K562 (cell line): ENCODE measurements at regions of chr20 and their contacts with region 1.

Region 1: DNA sequence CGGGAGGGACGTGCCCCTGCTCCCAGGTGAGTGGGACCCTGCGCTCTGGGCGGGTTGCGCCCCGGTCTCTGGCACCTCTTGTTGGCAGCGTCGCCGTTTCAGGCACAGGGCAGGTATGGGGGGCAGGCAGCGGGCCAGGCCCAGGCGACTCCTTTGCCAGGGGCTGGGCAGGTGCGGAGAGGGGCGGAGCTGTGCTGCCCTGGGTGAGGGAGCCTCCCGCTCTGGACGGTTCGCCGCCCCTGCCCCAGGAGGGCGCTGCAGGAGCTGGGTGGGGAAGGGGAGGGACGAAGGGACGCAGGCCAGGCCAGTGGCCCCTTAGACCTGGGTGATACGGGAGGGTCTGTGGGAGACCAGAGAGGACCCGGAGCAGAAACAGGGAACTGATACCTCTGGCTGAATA is 663.9 kb upstream of the DEFB115 start:
- DNase-seq: peak in 3 of 4 experiments; percentile 18 to 44 (median 36)
- ATAC-seq: peak; percentile 90
- H3K4me3 ChIP-seq: no peak overlapping the region
- H3K27ac ChIP-seq: no peak overlapping the region
- H3K4me1 ChIP-seq: peaks cover 0 to 8% of the 10 kb centered on the region in 2 experiments; a peak in 2 of 5 replicates
- H3K27me3 ChIP-seq: no peaks in the 10 kb centered on the region; a peak in 1 of 5 replicates
- CTCF ChIP-seq: peak; percentile 39 to 60 (median 43); a peak in 5 of 6 replicates
- EP300 ChIP-seq: no peak
- POLR2A ChIP-seq: no peak
- RAD21 ChIP-seq: peak in 1 of 2 experiments; percentile 56; a peak in 2 of 4 replicates

Region 2: GRCh38 chr20:29427201-29428060 is 1166.1 kb before region 1 on chr20:
- CTCF ChIA-PET with region 1: no interaction called
- POLR2A ChIA-PET with region 1: no interaction called
- in situ Hi-C with region 1: no loop called
- intact Hi-C with region 1: no loop called
- DNase-seq: peak in 1 of 4 experiments; percentile 35
- ATAC-seq: no peak
- H3K4me3 ChIP-seq: peak overlapping the region; percentile 43
- H3K27ac ChIP-seq: no peak overlapping the region
- H3K4me1 ChIP-seq: peaks cover 0 to 5% of the 10 kb centered on the region in 2 experiments; a peak in 2 of 5 replicates
- H3K27me3 ChIP-seq: no peaks in the 10 kb centered on the region
- CTCF ChIP-seq: peak in 2 of 3 experiments; percentile 28 to 31; a peak in 2 of 6 replicates
- EP300 ChIP-seq: no peak
- POLR2A ChIP-seq: no peak
- RAD21 ChIP-seq: no peak

Region 3: DNA sequence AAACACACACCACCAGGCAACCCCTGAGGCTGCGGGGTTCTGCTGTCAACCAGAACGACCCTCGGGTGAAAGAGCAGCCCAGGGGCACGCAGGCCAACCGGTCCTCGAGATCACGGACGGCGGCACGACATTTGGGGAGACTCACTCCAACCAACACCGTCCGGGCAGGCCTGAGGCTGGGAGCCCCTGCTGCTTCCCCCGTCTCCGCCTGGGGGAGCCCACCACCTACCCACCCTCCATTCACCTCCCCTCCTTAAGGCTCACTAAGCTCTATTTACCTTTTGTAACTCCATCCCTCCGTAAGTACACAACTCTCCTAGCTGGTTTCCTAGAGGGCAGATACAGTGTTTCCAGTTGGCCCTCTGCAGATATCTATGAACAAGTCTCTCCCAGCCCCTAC is 307.4 kb before region 1 on chr20:
- CTCF ChIA-PET with region 1: no interaction called
- POLR2A ChIA-PET with region 1: no interaction called
- in situ Hi-C with region 1: no loop called
- intact Hi-C with region 1: loop called (anchors 10 kb)
- DNase-seq: peak; percentile 42 to 60 (median 49)
- ATAC-seq: peak; percentile 86
- H3K4me3 ChIP-seq: no peak overlapping the region
- H3K27ac ChIP-seq: no peak overlapping the region
- H3K4me1 ChIP-seq: peaks cover 0 to 40% of the 10 kb centered on the region in 2 experiments; a peak in 4 of 5 replicates
- H3K27me3 ChIP-seq: no peaks in the 10 kb centered on the region
- CTCF ChIP-seq: peak; percentile 65 to 74 (median 67)
- EP300 ChIP-seq: no peak
- POLR2A ChIP-seq: no peak
- RAD21 ChIP-seq: peak; percentile 71 to 87

Region 4: DNA sequence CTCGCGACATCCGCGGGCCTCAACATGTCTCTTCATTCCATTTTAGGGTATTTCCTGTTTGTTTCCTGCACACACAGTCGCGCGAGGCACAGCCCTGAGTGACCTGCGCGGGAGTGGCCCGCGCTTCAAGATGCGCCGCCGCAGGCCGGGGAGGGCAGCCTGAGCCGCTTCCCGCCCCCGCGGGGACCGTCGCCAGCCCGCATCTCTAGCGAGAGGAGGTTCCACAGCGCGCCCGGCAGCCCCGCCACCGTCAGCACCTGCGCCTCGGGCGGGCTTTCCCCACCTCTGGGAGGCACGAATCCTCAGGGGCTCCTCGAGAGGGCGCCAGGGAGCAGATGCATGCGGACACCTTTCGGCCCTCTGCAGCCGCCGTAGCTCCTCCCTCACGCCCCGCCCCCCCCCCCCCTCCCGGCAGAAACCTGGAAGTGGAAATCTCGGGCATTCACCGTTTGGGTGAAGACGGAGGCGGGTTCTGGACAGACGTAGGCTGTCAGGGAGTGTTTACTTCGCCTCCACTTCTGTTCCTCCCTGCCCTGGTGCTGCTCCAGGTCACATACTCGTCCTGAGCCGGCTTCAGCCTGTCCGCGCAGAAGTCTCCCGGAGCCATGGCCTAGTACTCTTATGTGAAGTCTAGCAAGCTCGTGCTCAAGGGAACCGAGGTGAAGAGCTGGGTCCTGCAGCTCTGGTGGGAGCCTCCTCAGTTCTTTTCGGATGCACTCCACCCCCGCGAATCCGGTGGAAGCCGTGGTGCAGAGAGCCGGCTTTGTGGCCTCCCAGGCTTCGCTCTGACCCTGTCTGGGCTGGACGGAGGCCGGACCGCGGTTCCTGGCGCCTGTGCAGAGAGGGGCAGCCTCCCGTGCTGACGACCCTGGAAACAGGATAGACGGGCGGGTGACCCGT is 216.6 kb before region 1 on chr20:
- CTCF ChIA-PET with region 1: no interaction called
- POLR2A ChIA-PET with region 1: no interaction called
- in situ Hi-C with region 1: no loop called
- intact Hi-C with region 1: loop called (anchors 10 kb)
- DNase-seq: peak; percentile 82 to 91 (median 84)
- ATAC-seq: peak; percentile 99
- H3K4me3 ChIP-seq: peak overlapping the region; percentile 81
- H3K27ac ChIP-seq: peak overlapping the region; percentile 80; the same call in 2 of the 3 replicates
- H3K4me1 ChIP-seq: peaks cover 0 to 5% of the 10 kb centered on the region in 2 experiments; a peak in 2 of 5 replicates
- H3K27me3 ChIP-seq: no peaks in the 10 kb centered on the region
- CTCF ChIP-seq: peak; percentile 66 to 80 (median 68); a peak in 5 of 6 replicates
- EP300 ChIP-seq: peak; percentile 15; the same call in 1 of the 2 replicates
- POLR2A ChIP-seq: peak; percentile 78
- RAD21 ChIP-seq: 0 out of 4 replicates have a peak, but pooled peaks of 1 of the 2 experiments have one; percentile 21

Region 5: DNA sequence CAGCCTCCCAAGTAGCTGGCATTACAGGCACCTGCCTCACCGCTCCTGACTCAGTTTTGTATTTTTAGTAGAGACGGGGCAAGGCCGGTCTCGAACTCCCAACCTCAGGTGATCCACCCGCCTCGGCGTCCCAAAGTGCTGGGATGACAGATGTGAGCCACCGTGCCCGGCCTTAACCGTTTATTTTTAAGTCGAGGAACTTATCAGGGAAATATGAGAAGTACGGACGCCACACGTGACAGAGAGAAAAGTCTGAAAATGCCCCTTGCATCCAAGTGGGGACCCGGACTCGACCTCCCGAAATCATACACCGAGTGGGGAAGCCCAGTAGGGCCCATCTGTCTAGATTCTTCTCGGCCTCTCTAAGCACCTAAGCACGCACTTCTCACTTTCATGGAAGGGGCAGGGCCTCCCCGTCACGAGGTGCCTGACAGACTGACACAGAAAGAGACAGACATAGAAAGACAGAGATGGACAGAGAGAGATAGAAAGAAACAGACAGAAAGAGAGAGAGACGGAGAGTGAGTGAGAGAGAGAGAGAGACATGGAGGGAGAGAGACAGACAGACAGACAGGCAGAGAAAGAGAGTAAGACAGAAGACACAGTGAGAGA is 92.6 kb before region 1 on chr20:
- CTCF ChIA-PET with region 1: no interaction called
- POLR2A ChIA-PET with region 1: no interaction called
- in situ Hi-C with region 1: no loop called
- intact Hi-C with region 1: loop called (anchors 10 kb)
- DNase-seq: no peak
- ATAC-seq: peak; percentile 23; the same call in 1 of the 3 replicates
- H3K4me3 ChIP-seq: no peak overlapping the region
- H3K27ac ChIP-seq: no peak overlapping the region
- H3K4me1 ChIP-seq: no peaks in the 10 kb centered on the region; a peak in 1 of 5 replicates
- H3K27me3 ChIP-seq: no peaks in the 10 kb centered on the region; a peak in 1 of 5 replicates
- CTCF ChIP-seq: no peak; a peak in 1 of 6 replicates
- EP300 ChIP-seq: no peak
- POLR2A ChIP-seq: no peak
- RAD21 ChIP-seq: no peak

Region 6: GRCh38 chr20:30892541-30893345 is 299.2 kb after region 1 on chr20:
- CTCF ChIA-PET with region 1: no interaction called
- POLR2A ChIA-PET with region 1: no interaction called
- in situ Hi-C with region 1: no loop called
- intact Hi-C with region 1: no loop called
- DNase-seq: no peak
- ATAC-seq: no peak
- H3K4me3 ChIP-seq: no peak overlapping the region
- H3K27ac ChIP-seq: no peak overlapping the region
- H3K4me1 ChIP-seq: peaks cover 0 to 8% of the 10 kb centered on the region in 2 experiments; a peak in 2 of 5 replicates
- H3K27me3 ChIP-seq: peaks cover 0 to 21% of the 10 kb centered on the region in 2 experiments; a peak in 1 of 5 replicates
- CTCF ChIP-seq: no peak
- EP300 ChIP-seq: no peak
- POLR2A ChIP-seq: no peak
- RAD21 ChIP-seq: no peak